AG04449 (cell line): ENCODE measurements at regions of chr4 and their contacts with region 1.

Region 1: GRCh38 chr4:76179398-76180318 is 31.5 kb upstream of the NUP54 start:
- DNase-seq: no peak
- H3K4me3 ChIP-seq: no peak overlapping the region
- CTCF ChIP-seq: peak; percentile 86

Region 2: DNA sequence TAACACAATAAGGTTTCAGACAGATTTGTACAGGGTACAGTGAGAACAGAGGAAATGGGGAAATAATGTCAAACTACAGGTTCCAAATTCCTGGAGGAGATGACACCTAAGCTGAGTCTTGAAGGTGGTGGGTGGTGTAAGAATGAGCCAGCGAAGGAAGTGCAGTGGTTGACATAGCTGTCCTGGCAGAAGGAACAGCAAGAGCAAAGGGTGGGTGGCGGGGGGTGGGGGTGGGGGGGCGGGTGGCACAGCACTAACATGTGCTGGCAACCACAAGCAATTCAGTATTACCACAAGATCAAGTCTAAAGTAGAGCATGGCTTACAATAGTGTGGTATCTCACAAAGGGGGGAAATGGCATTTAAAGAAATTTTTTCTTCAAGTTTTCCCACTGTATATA is 493.3 kb before region 1 on chr4:
- CTCF ChIA-PET with region 1: no interaction called
- POLR2A ChIA-PET with region 1: no interaction called
- DNase-seq: no peak
- H3K4me3 ChIP-seq: no peak overlapping the region
- CTCF ChIP-seq: no peak

Region 3: GRCh38 chr4:76166480-76166879 is 13.2 kb before region 1 on chr4:
- CTCF ChIA-PET with region 1: interaction called, 76 read pairs
- POLR2A ChIA-PET with region 1: no interaction called
- DNase-seq: no peak
- H3K4me3 ChIP-seq: no peak overlapping the region
- CTCF ChIP-seq: no peak

Region 4: DNA sequence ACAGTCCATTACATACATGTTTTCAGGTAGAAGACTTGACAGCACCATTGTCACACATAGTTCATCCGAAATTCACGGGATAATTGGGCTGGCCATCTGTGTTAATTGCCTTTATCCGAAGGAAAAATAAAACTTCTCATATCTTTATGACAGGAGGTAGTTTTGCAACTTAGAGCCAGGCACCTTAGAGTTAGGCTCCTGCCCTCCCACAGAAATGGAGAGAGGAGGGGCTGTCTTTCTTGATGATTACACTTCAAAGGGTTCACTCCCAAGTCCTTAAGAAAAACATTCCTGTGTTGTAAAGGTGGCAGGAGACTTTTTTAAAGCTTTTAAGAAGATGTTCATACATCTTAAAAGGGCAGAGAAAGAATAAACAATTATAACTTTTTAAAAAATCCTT is 44.5 kb after region 1 on chr4:
- CTCF ChIA-PET with region 1: interaction called, 15 read pairs
- POLR2A ChIA-PET with region 1: no interaction called
- DNase-seq: no peak
- H3K4me3 ChIP-seq: no peak overlapping the region
- CTCF ChIP-seq: no peak

Region 5: DNA sequence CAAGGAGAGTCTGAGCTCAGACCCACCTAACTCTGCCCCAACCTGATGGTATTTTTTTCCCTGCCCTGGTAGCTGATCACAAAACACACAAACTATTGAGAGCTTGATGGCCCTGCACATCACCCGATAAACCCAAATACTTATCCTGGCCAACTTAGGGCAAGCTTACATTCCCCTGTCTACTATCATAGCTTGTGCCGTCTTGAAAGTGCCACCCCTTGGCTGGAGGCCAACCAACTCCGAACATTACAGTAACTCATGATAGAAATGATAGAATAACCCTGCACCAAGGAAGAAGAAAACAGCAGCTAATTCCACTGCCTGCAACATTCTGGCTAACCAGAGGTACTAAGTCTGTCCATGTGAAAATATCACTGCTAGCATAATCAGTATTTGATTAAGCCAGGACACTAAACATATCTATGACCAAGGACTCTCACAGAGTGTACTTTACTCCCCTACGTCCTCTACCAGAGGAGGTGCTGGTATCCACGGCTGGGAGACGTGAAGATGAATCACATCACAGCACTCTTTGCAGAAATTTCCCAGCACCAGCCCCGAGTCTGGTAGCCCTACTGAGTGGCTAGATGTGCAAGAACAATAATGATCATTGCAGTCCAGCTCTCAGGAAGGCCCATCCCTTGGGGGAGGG is 135.7 kb after region 1 on chr4:
- CTCF ChIA-PET with region 1: interaction called, 73 read pairs
- POLR2A ChIA-PET with region 1: no interaction called
- DNase-seq: no peak
- H3K4me3 ChIP-seq: no peak overlapping the region
- CTCF ChIP-seq: no peak

Region 6: DNA sequence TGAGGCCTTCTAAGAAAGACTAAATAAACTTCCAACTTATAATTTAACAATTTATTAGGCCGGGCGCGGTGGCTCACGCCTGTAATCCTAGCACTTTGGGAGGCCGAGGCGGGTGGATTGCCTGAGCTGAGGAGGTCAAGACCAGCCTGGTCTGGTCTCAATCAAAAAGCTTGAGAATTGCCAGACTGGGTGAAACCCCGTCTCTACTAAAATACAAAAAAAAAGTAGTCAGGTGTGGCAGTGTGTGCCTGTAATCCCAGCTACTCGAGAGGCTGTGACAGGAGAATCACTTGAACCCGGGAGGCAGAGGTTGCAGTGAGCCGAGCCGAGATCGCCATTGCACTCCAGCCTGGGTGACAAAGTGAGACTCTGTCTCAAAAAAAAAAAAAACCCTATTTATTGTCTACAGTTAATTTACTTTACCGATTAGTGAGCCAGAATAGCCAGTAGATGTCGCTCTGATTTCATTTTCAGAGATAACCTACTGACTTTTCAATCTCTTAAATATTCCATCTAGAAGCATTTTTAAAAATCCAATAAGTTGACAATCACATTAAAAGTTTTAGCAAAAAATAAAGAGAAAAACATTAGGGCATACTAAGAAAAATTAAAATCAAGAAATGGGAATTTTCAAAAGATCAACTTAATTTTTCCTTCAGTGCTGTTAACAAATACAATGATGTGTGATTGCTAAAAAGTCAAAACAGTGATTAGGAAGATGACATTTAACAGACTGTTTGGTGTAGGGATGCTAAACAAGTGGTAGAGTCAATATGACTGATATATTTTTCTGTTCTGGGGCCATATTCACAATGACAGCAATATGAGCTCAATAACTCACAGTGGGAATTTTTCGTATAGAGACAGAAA is 251.1 kb after region 1 on chr4:
- CTCF ChIA-PET with region 1: interaction called, 44 read pairs
- POLR2A ChIA-PET with region 1: no interaction called
- DNase-seq: peak; percentile 14
- H3K4me3 ChIP-seq: no peak overlapping the region
- CTCF ChIP-seq: peak; percentile 36